Heart right ventricle (tissue), 16 donors: ENCODE measurements at regions of chr13 and their contacts with region 1.

Region 1: GRCh38 chr13:40401911-40402776 is 264.3 kb downstream of the FOXO1 start:
- DNase-seq: peak; percentile 95
- ATAC-seq: peak; percentile 95 to 98 (median 96)
- H3K4me3 ChIP-seq: peak overlapping the region in 5 of 10 donors; percentile 2 to 23 (median 16)
- H3K27ac ChIP-seq: peak overlapping the region in 9 of 10 donors; percentile 40 to 87 (median 66)
- H3K4me1 ChIP-seq: peaks cover 2 to 43% (median 34%) of the 10 kb centered on the region in 9 donors
- H3K27me3 ChIP-seq: no peaks in the 10 kb centered on the region
- CTCF ChIP-seq: no peak

Region 2: DNA sequence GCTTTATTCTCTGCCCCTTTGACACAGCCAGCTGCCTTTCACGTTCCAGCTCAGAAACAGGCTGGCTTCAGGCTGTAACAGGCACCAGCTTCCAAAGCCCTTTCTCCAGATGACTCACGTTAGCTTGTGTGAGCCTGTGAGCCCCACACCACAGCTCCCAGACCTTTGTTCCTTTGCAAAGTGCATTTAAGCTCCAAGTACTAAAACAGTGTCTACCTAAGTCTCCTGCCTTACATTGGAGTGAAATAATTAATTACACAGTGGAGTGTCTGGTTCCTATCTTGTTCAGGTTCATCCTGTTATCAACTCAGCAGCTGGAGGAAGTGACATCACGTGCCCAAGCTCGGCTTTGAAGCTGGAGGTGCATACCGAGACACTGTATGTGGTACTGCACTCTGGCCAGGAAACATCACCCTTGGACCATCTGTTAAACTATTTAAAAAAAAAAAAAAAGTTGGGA is 211.5 kb before region 1 on chr13:
- intact Hi-C with region 1: loop called in 2 of 10 experiments (anchors 2 to 10 kb)
- DNase-seq: no peak
- ATAC-seq: peak; percentile 42 to 64 (median 56)
- H3K4me3 ChIP-seq: no peak overlapping the region
- H3K27ac ChIP-seq: peak overlapping the region; percentile 32 to 89 (median 78)
- H3K4me1 ChIP-seq: peaks cover 20 to 55% (median 42%) of the 10 kb centered on the region in 9 donors
- H3K27me3 ChIP-seq: no peaks in the 10 kb centered on the region
- CTCF ChIP-seq: no peak

Region 3: DNA sequence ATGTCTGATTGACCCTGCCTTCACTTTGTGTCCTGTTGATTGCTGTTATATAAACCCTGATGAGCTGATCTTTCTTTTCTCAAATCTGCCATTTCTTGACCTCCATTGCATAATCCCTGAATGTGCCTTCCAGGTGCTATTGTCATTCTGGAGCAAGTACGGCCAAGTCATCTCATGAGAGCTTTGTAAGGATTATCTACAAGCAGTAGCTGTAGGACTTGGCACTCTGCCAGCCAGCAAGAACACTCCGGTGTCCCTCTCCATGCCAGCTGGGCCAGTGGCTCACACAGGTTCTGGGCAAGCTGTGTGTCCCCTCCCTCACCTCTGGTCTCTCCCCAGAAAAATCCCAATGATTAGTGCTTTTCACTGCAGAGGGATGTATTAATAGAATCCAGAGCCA is 83.8 kb before region 1 on chr13:
- intact Hi-C with region 1: loop called in 1 of 10 experiments (anchors 5 kb)
- DNase-seq: peak; percentile 41 to 61
- ATAC-seq: peak in 5 of 8 donors; percentile 22 to 70 (median 36)
- H3K4me3 ChIP-seq: no peak overlapping the region
- H3K27ac ChIP-seq: no peak overlapping the region
- H3K4me1 ChIP-seq: peaks cover 0 to 31% (median 19%) of the 10 kb centered on the region in 9 donors
- H3K27me3 ChIP-seq: peaks cover 0 to 2% (median 0%) of the 10 kb centered on the region in 7 donors
- CTCF ChIP-seq: no peak

Region 4: DNA sequence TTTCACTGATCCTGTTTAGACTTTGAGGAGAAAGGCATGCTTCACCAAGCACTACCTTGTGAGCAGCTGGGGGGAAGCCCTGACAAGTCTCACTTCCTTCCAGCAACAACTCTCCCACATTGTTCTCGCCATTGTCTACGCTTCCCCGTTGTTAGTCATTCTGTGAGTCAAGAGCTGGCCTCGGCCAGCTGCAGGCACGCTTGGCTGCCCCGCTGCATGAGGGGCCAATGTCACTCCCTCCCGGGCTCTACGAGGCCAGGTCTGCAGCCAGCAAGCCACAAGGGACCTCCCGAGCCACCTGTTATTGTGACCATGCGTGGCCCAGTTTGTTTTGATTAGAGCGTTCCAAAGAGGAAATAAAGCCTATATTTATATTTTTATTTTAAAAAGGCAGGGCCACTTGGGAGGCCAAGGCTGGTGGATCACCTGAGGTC is 43.4 kb after region 1 on chr13:
- intact Hi-C with region 1: loop called in 1 of 10 experiments (anchors 5 kb)
- DNase-seq: peak; percentile 56 to 72
- ATAC-seq: peak; percentile 71 to 91 (median 84)
- H3K4me3 ChIP-seq: no peak overlapping the region
- H3K27ac ChIP-seq: peak overlapping the region in 6 of 10 donors; percentile 13 to 70 (median 58)
- H3K4me1 ChIP-seq: peaks cover 7 to 58% (median 43%) of the 10 kb centered on the region in 9 donors
- H3K27me3 ChIP-seq: no peaks in the 10 kb centered on the region
- CTCF ChIP-seq: no peak

Region 5: GRCh38 chr13:40517486-40518480 is 115.6 kb after region 1 on chr13:
- intact Hi-C with region 1: no loop called
- DNase-seq: no peak
- ATAC-seq: no peak
- H3K4me3 ChIP-seq: no peak overlapping the region
- H3K27ac ChIP-seq: no peak overlapping the region
- H3K4me1 ChIP-seq: peaks cover 0 to 9% (median 5%) of the 10 kb centered on the region in 9 donors
- H3K27me3 ChIP-seq: no peaks in the 10 kb centered on the region
- CTCF ChIP-seq: no peak